ENCODE measurements at regions of chr1 and their contacts with region 1.

Region 1: DNA sequence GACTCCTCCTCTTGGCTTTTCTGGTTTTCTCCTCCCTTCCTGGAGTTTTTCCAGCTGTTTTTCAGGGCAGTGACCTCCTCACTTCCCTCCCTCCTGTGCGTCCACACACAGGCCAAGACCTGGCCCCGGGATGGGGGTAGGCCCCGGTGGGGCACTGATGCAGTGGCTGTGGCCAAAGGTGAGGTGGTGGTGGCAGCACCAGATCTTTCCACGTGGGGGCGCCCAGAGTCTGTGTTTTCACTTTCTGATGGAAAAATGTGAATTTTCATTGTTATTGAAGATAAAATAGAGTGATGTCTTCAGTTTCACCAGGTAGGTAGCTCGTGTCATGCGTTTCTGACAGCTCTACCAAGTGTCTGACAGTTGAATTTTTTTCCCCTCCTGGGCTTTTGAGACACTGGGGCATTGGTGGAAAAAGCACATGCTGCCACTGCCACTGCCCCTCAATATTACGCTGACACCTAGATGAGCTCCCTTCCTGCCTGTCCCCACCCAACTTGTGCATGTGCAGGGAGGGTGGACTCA is 39.9 kb upstream of the MAGOH start:
- DNase-seq: peak; percentile 81
- H3K4me3 Mint-ChIP-seq: no peak overlapping the region
- H3K27ac Mint-ChIP-seq: peak overlapping the region; percentile 42
- H3K4me1 Mint-ChIP-seq: no peaks in the 10 kb centered on the region
- H3K27me3 Mint-ChIP-seq: no peaks in the 10 kb centered on the region

Region 2: GRCh38 chr1:53249706-53250105 is 28.6 kb before region 1 on chr1:
- CTCF ChIA-PET with region 1: no interaction called
- DNase-seq: no peak
- H3K4me3 Mint-ChIP-seq: no peak overlapping the region
- H3K27ac Mint-ChIP-seq: no peak overlapping the region
- H3K4me1 Mint-ChIP-seq: no peaks in the 10 kb centered on the region
- H3K27me3 Mint-ChIP-seq: no peaks in the 10 kb centered on the region

Region 3: GRCh38 chr1:53413175-53414001 is 135.1 kb after region 1 on chr1:
- CTCF ChIA-PET with region 1: interaction called, 16 read pairs
- DNase-seq: peak; percentile 75
- H3K4me3 Mint-ChIP-seq: peak overlapping the region; percentile 46
- H3K27ac Mint-ChIP-seq: peak overlapping the region; percentile 99
- H3K4me1 Mint-ChIP-seq: peaks cover 49% of the 10 kb centered on the region
- H3K27me3 Mint-ChIP-seq: peaks cover 14% of the 10 kb centered on the region

Measured in activated naive CD4-positive, alpha-beta T cell treated with anti-CD3 and anti-CD28 coated beads, Interleukin-2, amount 10 ng/mL, durations not matched to agents 7 days and 5 days (primary cell).